Panc1 (cell line): ENCODE measurements at regions of chr11 and their contacts with region 1.

Region 1: DNA sequence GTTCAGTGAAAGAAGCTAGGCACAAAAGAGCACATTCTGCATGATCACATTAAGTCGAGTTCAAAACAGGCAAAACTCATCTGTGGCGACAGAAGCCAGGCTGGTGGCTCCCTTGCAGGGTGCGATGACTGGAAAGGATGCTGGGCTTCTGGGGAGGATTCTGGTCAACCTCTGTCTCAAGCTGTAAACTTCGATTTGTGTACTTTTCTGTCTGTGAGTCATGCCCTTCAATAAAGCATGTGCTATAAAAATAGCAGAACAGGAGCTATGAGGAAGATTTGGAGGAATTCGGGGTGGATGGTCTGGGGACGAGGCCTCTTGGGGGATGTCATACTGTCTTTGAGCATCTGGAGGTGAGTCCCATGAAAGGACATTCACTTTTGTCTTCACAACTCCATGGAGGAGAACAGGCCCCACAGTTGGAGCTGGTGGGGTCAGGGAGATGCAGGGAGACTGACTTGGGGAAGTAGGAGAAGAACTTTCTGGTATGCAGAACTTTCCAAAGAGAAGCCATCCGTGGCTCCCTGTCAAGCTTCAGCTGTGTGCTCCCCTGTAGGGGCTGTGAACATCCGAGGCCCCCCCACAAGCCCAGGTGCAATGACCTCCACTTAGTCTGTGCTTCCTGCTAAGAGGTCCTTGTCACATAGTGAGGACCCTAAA is 77.8 kb upstream of the LINC01488 start:
- DNase-seq: no peak
- ATAC-seq: peak; percentile 60
- H3K4me3 ChIP-seq: no peak overlapping the region
- H3K27ac ChIP-seq: no peak overlapping the region; the same call in 1 of the 2 replicates
- H3K4me1 ChIP-seq: peaks cover 10% of the 10 kb centered on the region
- H3K27me3 ChIP-seq: no peaks in the 10 kb centered on the region
- CTCF ChIP-seq: no peak

Region 2: DNA sequence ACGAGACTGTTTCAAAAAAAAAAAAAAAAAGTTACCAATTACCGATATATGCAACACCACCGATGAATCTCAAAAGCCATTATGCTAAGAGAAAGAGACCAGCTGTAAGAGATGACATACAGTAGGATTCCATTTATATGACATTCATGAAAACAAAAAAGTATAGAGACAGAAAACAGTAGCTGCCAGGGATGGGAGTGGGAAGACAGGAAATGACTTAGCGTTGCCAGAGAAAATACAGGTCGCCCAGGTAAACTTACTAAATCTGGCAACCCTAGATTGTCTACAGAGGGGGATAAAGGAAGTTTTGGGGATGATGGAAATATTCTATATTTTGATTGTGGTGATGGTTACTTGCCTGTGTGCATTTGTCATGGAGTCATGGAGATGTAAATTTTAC is 1124.0 kb before region 1 on chr11:
- CTCF ChIA-PET with region 1: no interaction called
- POLR2A ChIA-PET with region 1: interaction called, 12 read pairs
- in situ Hi-C with region 1: no loop called
- intact Hi-C with region 1: no loop called
- DNase-seq: no peak
- ATAC-seq: no peak
- H3K4me3 ChIP-seq: no peak overlapping the region
- H3K27ac ChIP-seq: no peak overlapping the region
- H3K4me1 ChIP-seq: no peaks in the 10 kb centered on the region
- H3K27me3 ChIP-seq: no peaks in the 10 kb centered on the region
- CTCF ChIP-seq: no peak

Region 3: GRCh38 chr11:69327741-69328191 is 75.9 kb before region 1 on chr11:
- CTCF ChIA-PET with region 1: no interaction called
- POLR2A ChIA-PET with region 1: no interaction called
- in situ Hi-C with region 1: no loop called
- intact Hi-C with region 1: no loop called
- DNase-seq: no peak
- ATAC-seq: peak; percentile 15; the same call in 1 of the 2 replicates
- H3K4me3 ChIP-seq: no peak overlapping the region
- H3K27ac ChIP-seq: peak overlapping the region; percentile 92
- H3K4me1 ChIP-seq: peaks cover 48% of the 10 kb centered on the region
- H3K27me3 ChIP-seq: no peaks in the 10 kb centered on the region
- CTCF ChIP-seq: no peak

Region 4: GRCh38 chr11:69497221-69497787 is 93.6 kb after region 1 on chr11:
- CTCF ChIA-PET with region 1: no interaction called
- POLR2A ChIA-PET with region 1: no interaction called
- in situ Hi-C with region 1: loop called (anchors 10 kb)
- intact Hi-C with region 1: no loop called
- DNase-seq: peak; percentile 8
- ATAC-seq: peak; percentile 94
- H3K4me3 ChIP-seq: no peak overlapping the region
- H3K27ac ChIP-seq: peak overlapping the region; percentile 63; the same call in 1 of the 2 replicates
- H3K4me1 ChIP-seq: peaks cover 45% of the 10 kb centered on the region
- H3K27me3 ChIP-seq: no peaks in the 10 kb centered on the region
- CTCF ChIP-seq: no peak